Activated CD8-positive, alpha-beta T cell treated with anti-CD3 and anti-CD28 coated beads for 36 hours (primary cell): ENCODE measurements at regions of chr4 and their contacts with region 1.

Region 1: DNA sequence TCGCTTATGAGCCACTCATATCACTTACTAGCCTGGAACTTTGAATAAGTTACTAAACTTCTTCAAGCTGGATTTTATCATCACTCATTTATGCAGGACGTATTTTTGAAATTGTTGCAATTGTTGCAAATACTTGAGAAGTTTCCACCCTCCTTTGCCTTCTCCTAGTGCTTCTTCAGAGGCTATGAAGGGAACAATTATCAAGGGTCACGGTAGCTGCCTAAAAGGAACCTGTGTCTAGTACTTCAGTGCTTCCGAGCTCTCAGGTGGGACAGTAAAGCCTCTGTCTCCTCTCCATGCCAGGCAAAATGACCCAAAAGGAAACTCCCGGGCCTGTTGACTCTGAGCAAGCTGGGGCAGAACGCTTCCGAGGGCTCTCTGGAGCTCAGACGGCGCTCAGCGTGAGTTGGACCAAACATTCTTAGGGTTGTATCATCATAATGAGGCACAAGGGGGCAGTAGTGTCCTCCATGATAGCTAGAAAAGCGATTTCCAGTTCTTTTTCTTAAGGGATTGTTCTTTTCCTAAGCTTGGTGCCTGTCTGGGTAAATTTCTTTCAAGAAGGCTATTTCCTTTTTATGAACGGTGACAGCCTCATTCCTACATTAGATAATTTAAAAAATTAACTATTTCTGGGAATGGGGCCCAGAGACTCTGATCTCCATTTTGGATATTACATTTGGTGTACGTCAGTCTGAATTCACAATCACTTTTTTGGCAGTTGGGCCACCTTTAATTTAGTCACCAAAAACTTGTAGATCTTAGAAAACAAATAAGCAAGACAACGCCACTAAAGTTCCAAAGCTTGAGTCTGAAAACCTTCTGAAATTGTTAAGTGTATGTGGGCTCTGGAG is 73.1 kb downstream of the PACRGL start:
- DNase-seq: peak; percentile 37
- ATAC-seq: peak; percentile 51
- H3K4me3 Mint-ChIP-seq: no peak overlapping the region
- H3K27ac Mint-ChIP-seq: no peak overlapping the region
- H3K4me1 Mint-ChIP-seq: no peaks in the 10 kb centered on the region
- H3K27me3 Mint-ChIP-seq: no peaks in the 10 kb centered on the region
- CTCF ChIP-seq: peak; percentile 53

Region 2: DNA sequence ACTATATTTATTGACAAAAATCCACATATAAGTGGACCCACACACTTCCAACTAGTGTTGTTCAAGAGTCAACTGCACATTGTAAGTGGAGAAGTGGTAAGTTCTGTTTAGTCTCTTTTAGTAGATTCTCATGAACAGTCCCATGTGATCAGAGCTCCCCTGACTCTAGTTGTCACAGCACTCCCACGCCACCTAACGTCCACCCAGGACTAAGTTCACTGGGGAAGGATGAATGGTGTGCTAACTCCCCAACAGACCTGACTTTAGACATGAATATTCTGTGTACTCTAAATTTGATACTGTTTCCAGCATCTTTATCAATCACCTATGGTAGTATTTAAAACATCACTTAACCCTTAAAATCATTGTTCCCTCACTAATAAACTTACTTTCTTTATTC is 13.3 kb before region 1 on chr4:
- CTCF ChIA-PET with region 1: interaction called, 10 read pairs
- POLR2A ChIA-PET with region 1: no interaction called
- intact Hi-C with region 1: no loop called
- DNase-seq: no peak
- ATAC-seq: no peak
- H3K4me3 Mint-ChIP-seq: no peak overlapping the region
- H3K27ac Mint-ChIP-seq: no peak overlapping the region
- H3K4me1 Mint-ChIP-seq: no peaks in the 10 kb centered on the region
- H3K27me3 Mint-ChIP-seq: no peaks in the 10 kb centered on the region
- CTCF ChIP-seq: no peak

Region 3: GRCh38 chr4:21134994-21135393 is 361.6 kb after region 1 on chr4:
- CTCF ChIA-PET with region 1: interaction called, 7 read pairs
- POLR2A ChIA-PET with region 1: no interaction called
- intact Hi-C with region 1: loop called (anchors 10 kb)
- DNase-seq: no peak
- ATAC-seq: no peak
- H3K4me3 Mint-ChIP-seq: no peak overlapping the region
- H3K27ac Mint-ChIP-seq: no peak overlapping the region
- H3K4me1 Mint-ChIP-seq: no peaks in the 10 kb centered on the region
- H3K27me3 Mint-ChIP-seq: no peaks in the 10 kb centered on the region
- CTCF ChIP-seq: no peak

Region 4: DNA sequence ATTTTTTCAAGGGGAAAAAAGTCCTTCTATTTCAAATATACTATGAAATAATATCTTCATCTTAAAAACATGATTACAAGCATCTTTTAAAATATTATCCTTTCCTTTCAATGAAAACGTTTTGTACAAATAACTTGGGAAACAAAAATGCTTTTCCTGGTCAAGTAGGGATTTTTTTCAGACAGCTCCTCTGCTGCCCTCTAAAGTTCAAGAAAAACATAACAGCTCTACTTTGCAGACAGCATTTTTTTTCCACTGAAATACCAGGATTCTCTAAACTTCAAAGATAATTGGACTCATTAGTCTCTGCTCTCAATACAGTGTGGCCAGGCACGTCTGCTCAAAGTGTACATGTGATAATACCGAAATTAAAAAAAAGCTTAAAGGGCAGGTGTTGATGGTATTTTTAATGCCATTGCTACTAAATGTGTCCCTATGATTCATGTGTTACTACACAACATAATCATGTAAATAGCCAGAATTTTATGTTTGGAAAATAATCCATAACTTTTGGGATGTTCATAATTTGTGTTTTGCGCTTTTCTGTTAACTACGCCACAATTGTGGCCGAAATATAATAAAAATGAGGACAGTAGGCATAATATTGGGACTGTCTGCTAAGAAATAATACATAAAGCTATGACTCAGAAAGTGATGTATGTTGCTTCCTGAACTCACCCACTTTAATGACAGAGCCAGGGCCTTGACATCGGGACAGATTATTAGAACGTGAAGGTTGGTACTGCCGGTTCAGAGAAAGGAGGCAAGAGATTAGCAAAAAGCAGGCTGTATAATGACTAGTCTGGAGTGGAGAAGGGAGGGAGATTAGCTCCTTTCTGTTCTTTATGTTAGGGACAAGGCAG is 696.3 kb after region 1 on chr4:
- CTCF ChIA-PET with region 1: interaction called, 10 read pairs
- POLR2A ChIA-PET with region 1: no interaction called
- intact Hi-C with region 1: loop called (anchors 10 kb)
- DNase-seq: no peak
- ATAC-seq: no peak
- H3K4me3 Mint-ChIP-seq: no peak overlapping the region
- H3K27ac Mint-ChIP-seq: no peak overlapping the region
- H3K4me1 Mint-ChIP-seq: no peaks in the 10 kb centered on the region
- H3K27me3 Mint-ChIP-seq: no peaks in the 10 kb centered on the region
- CTCF ChIP-seq: peak; percentile 49

Region 5: GRCh38 chr4:21765810-21766407 is 992.5 kb after region 1 on chr4:
- CTCF ChIA-PET with region 1: interaction called, 8 read pairs
- POLR2A ChIA-PET with region 1: no interaction called
- intact Hi-C with region 1: loop called (anchors 10 kb)
- DNase-seq: peak; percentile 54
- ATAC-seq: peak; percentile 61
- H3K4me3 Mint-ChIP-seq: no peak overlapping the region
- H3K27ac Mint-ChIP-seq: no peak overlapping the region
- H3K4me1 Mint-ChIP-seq: peaks cover 8% of the 10 kb centered on the region
- H3K27me3 Mint-ChIP-seq: peaks cover 13% of the 10 kb centered on the region
- CTCF ChIP-seq: peak; percentile 64